MCF 10A (cell line): ENCODE measurements at regions of chr19 and their contacts with region 1.

Region 1: GRCh38 chr19:35995048-35995993 is at the start of gene SDHAF1:
- DNase-seq: peak; percentile 95
- H3K4me3 Mint-ChIP-seq: peak within 1 kb of the TSS; percentile 86
- H3K27ac Mint-ChIP-seq: peak within 1 kb of the TSS; percentile 93
- H3K4me1 Mint-ChIP-seq: peaks cover 21% of the 10 kb centered on the region
- H3K27me3 Mint-ChIP-seq: no peaks in the 10 kb centered on the region
- CTCF ChIP-seq: no peak
- total RNA-seq, gene SDHAF1: 14.4 and 15.0 TPM in 2 replicates

Region 2: DNA sequence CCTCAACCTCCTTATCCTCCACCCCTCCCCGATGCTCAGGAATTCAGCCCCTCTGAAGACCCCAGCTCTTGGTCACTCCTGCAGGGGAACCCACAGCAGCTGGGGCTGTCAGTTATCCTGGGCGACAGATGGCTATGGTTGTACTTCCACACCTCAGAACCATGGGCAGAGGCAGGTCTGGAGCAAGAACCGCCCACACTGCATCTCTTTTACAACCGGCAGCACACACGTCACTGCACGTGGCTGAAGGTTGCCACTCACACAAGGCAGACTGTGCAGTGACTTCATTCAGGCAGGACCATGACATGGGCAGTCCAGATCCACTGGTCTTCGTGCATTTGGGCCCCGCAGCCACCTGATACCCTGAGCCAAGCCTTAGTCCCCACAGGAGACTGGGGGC is 21.8 kb before region 1 on chr19:
- CTCF ChIA-PET with region 1: no interaction called
- POLR2A ChIA-PET with region 1: no interaction called
- intact Hi-C with region 1: no loop called
- DNase-seq: no peak
- H3K4me3 Mint-ChIP-seq: no peak overlapping the region
- H3K27ac Mint-ChIP-seq: no peak overlapping the region
- H3K4me1 Mint-ChIP-seq: no peaks in the 10 kb centered on the region
- H3K27me3 Mint-ChIP-seq: peaks cover 18% of the 10 kb centered on the region
- CTCF ChIP-seq: no peak

Region 3: DNA sequence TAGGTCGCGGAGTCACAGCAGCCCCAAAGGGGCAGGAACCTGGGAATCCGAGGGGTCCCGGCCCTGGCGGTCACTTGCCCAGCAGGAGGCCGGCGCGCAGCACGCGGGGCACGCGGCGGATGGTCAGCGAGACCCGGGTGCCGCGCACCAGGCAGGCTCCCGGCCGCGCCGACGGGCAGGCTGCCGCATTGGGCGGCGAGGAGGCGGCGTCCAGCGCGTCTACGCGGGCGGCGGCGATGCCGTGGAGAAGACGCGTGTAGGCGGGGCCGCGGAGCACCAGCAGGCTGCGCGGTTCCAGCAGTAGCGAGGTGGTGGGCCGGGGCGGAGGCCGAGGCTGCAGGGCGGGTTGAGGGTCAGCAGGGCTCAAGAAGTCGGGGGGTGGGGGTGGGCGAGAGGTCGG is 13.9 kb after region 1 on chr19:
- CTCF ChIA-PET with region 1: interaction called, 4 read pairs
- POLR2A ChIA-PET with region 1: interaction called, 12 read pairs
- intact Hi-C with region 1: no loop called
- DNase-seq: peak; percentile 60
- H3K4me3 Mint-ChIP-seq: peak overlapping the region; percentile 74
- H3K27ac Mint-ChIP-seq: peak overlapping the region; percentile 49
- H3K4me1 Mint-ChIP-seq: peaks cover 20% of the 10 kb centered on the region
- H3K27me3 Mint-ChIP-seq: no peaks in the 10 kb centered on the region
- CTCF ChIP-seq: no peak

Region 4: GRCh38 chr19:36014029-36014924 is 19.0 kb after region 1 on chr19 and contains the start of gene ALKBH6:
- CTCF ChIA-PET with region 1: no interaction called
- POLR2A ChIA-PET with region 1: interaction called, 12 read pairs
- intact Hi-C with region 1: no loop called
- DNase-seq: peak; percentile 100
- H3K4me3 Mint-ChIP-seq: peak within 1 kb of the TSS; percentile 89
- H3K27ac Mint-ChIP-seq: peak within 1 kb of the TSS; percentile 92
- H3K4me1 Mint-ChIP-seq: peaks cover 38% of the 10 kb centered on the region
- H3K27me3 Mint-ChIP-seq: no peaks in the 10 kb centered on the region
- CTCF ChIP-seq: no peak
- total RNA-seq, gene ALKBH6: 16.5 and 20.9 TPM in 2 replicates

Region 5: DNA sequence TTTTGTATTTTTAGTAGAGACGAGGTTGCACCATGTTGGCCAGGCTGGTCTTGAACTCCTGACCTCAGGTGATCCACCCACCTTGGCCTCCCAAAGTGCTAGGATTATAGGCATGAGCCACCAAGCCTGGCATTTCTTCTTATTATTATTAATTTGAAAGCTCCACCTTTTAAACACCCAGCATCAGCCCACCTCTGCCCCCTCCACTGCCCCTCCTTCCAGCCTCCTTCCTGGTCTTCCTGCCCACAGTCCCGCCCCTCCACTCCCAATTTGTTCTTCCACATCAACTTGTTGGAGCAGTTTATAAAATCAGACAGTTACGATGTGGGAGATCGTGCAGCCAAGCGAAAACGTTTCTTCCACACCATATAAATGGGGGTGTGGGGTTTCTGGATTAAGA is 45.2 kb after region 1 on chr19:
- CTCF ChIA-PET with region 1: no interaction called
- POLR2A ChIA-PET with region 1: no interaction called
- intact Hi-C with region 1: no loop called
- DNase-seq: no peak
- H3K4me3 Mint-ChIP-seq: no peak overlapping the region
- H3K27ac Mint-ChIP-seq: peak overlapping the region; percentile 66
- H3K4me1 Mint-ChIP-seq: peaks cover 26% of the 10 kb centered on the region
- H3K27me3 Mint-ChIP-seq: no peaks in the 10 kb centered on the region
- CTCF ChIP-seq: no peak

Region 6: GRCh38 chr19:36054119-36054732 is 58.9 kb after region 1 on chr19 and contains the start of gene THAP8:
- CTCF ChIA-PET with region 1: interaction called, 3 read pairs
- POLR2A ChIA-PET with region 1: no interaction called
- intact Hi-C with region 1: loop called (anchors 1 kb)
- DNase-seq: peak; percentile 99
- H3K4me3 Mint-ChIP-seq: peak within 1 kb of the TSS; percentile 86
- H3K27ac Mint-ChIP-seq: peak within 1 kb of the TSS; percentile 73
- H3K4me1 Mint-ChIP-seq: peaks cover 4% of the 10 kb centered on the region
- H3K27me3 Mint-ChIP-seq: no peaks in the 10 kb centered on the region
- CTCF ChIP-seq: peak; percentile 40
- total RNA-seq, gene THAP8: 4.0 and 4.7 TPM in 2 replicates